Activated B cell treated with CpG ODN at 0.5 μM for 24 hours (primary cell): ENCODE measurements at regions of chr10 and their contacts with region 1.

Region 1: DNA sequence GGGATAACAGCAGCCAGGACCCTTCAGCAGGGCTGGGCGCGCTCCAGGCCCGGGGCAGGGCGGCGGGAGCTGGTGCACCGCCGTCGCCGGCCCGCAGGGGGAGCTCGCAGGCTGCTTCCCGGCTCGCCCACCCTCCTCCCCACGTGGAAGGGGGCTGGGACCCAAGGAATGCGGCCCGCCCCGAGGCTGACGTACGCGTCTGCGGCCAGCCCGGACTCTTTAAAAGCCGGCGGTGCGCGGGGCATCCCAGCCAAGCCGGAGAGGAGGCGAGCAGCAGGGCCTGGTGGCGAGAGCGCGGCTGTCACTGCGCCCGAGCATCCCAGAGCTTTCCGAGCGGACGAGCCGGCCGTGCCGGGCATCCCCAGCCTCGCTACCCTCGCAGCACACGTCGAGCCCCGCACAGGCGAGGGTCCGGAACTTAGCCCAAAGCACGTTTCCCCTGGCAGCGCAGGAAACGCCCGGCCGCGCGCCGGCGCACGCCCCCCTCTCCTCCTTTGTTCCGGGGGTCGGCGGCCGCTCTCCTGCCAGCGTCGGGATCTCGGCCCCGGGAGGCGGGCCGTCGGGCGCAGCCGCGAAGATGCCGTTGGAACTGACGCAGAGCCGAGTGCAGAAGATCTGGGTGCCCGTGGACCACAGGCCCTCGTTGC is at the start of gene PFKFB3:
- DNase-seq: peak; percentile 96
- ATAC-seq: peak; percentile 72
- H3K4me3 Mint-ChIP-seq: peak within 1 kb of the TSS; percentile 97
- H3K27ac Mint-ChIP-seq: peak within 1 kb of the TSS; percentile 82
- H3K4me1 Mint-ChIP-seq: peaks cover 33% of the 10 kb centered on the region
- H3K27me3 Mint-ChIP-seq: no peaks in the 10 kb centered on the region
- CTCF ChIP-seq: no peak
- total RNA-seq, gene PFKFB3: 96.7 and 105 TPM in 2 replicates

Region 2: GRCh38 chr10:5889624-5890451 is 313.0 kb before region 1 on chr10 and contains the starts of genes ANKRD16 and FBH1:
- CTCF ChIA-PET with region 1: no interaction called
- POLR2A ChIA-PET with region 1: no interaction called
- intact Hi-C with region 1: loop called (anchors 1 kb)
- DNase-seq: peak; percentile 100
- ATAC-seq: peak; percentile 85
- H3K4me3 Mint-ChIP-seq: peak within 1 kb of the TSS; percentile 87
- H3K27ac Mint-ChIP-seq: peak within 1 kb of the TSS; percentile 78
- H3K4me1 Mint-ChIP-seq: peaks cover 59% of the 10 kb centered on the region
- H3K27me3 Mint-ChIP-seq: no peaks in the 10 kb centered on the region
- CTCF ChIP-seq: no peak
- total RNA-seq, gene ANKRD16: 9.2 and 11.1 TPM in 2 replicates
- total RNA-seq, gene FBH1: 65.5 and 68.7 TPM in 2 replicates

Region 3: GRCh38 chr10:6088721-6089390 is 114.0 kb before region 1 on chr10 and contains the start of gene RBM17:
- CTCF ChIA-PET with region 1: interaction called, 4 read pairs
- POLR2A ChIA-PET with region 1: interaction called, 5 read pairs
- intact Hi-C with region 1: loop called (anchors 5 kb)
- DNase-seq: peak; percentile 99
- ATAC-seq: peak; percentile 85
- H3K4me3 Mint-ChIP-seq: peak within 1 kb of the TSS; percentile 97
- H3K27ac Mint-ChIP-seq: peak within 1 kb of the TSS; percentile 87
- H3K4me1 Mint-ChIP-seq: peaks cover 69% of the 10 kb centered on the region
- H3K27me3 Mint-ChIP-seq: no peaks in the 10 kb centered on the region
- CTCF ChIP-seq: peak; percentile 99
- total RNA-seq, gene RBM17: 207 and 209 TPM in 2 replicates

Region 4: DNA sequence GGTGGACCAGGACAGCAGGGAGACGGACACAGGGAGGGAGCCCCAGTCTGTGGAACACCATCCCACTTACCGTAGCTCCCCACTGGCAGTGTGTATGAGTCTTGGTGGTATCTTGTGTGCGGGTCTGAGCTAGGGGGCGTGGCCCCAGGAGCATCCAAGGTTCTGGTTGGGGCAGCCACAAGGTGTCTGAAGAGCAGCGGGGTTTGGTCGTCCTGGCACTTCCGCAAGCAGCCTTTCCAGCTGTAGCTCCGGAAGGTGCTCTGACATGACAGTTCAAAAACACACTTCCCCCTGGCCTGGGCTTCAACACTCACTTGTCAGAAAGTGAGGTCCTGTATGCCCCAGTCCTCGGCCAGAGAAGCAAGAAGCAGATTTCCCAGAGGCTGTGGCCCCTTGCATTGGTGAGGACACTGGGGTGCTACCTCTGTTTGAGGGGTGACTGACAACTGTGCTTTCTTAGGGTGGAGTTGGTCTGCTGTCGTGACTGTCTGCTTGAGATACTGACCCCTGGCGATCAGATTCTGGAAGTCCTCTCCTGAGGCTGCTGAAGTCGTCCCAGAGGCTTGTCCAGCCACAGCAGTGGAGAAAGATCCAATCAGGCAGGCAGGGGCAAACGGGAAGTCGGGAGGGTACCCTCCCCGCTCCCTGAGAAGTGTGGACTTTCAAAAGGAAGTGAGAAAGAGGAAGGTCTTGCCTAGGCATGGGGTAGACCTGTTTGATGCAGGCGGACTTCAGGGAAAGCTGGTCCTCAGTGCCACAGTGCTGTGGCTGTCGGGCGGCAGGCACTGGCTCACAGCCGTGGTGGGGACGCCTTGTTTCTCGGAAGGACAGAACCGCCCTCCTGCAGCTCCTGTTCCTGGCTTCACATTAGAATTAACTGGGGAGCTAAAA is 51.5 kb before region 1 on chr10:
- CTCF ChIA-PET with region 1: interaction called, 11 read pairs
- POLR2A ChIA-PET with region 1: interaction called, 12 read pairs
- intact Hi-C with region 1: no loop called
- DNase-seq: peak; percentile 53
- ATAC-seq: peak; percentile 83
- H3K4me3 Mint-ChIP-seq: peak overlapping the region; percentile 79
- H3K27ac Mint-ChIP-seq: peak overlapping the region; percentile 85
- H3K4me1 Mint-ChIP-seq: peaks cover 45% of the 10 kb centered on the region
- H3K27me3 Mint-ChIP-seq: no peaks in the 10 kb centered on the region
- CTCF ChIP-seq: no peak

Region 5: DNA sequence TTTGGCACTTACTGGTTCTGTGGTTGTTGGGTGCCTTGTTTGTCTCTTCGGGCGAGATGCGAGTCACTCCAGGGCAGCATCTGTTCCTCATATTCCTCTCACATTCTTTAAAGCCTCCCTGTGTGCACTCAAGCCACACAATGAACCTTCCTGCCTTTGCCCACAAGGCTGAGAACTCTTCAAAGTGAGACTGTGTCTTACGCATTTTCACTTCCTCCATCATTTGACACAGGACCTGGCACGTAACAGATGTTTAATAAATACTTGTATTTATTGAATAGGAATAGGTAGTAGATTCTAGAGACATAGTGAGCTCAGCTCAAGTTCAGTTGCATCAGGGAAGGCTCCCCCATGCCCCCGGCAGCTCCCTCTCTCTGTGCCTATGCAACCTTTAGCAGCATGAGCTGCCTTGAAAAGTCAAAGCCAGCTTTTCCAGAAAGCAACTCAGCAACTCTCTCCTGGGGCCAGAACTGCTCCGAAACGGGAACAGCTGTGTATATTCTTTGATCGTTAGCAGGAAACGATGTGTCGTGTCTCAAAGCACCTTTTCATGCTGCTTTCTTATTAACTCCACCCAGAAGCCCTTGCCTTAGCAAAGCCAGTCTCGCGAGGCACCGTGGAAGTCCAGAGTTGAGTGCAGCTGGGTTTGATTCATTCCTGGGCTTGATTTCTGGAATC is 97.4 kb after region 1 on chr10:
- CTCF ChIA-PET with region 1: interaction called, 16 read pairs
- POLR2A ChIA-PET with region 1: interaction called, 46 read pairs
- intact Hi-C with region 1: loop called (anchors 1 kb)
- DNase-seq: peak; percentile 48
- ATAC-seq: peak; percentile 80
- H3K4me3 Mint-ChIP-seq: peak overlapping the region; percentile 75
- H3K27ac Mint-ChIP-seq: peak overlapping the region; percentile 96
- H3K4me1 Mint-ChIP-seq: peaks cover 82% of the 10 kb centered on the region
- H3K27me3 Mint-ChIP-seq: no peaks in the 10 kb centered on the region
- CTCF ChIP-seq: no peak

Region 6: GRCh38 chr10:6348096-6348874 is 145.5 kb after region 1 on chr10:
- CTCF ChIA-PET with region 1: interaction called, 41 read pairs
- POLR2A ChIA-PET with region 1: interaction called, 120 read pairs
- intact Hi-C with region 1: loop called (anchors 1 kb)
- DNase-seq: peak; percentile 65
- ATAC-seq: peak; percentile 91
- H3K4me3 Mint-ChIP-seq: peak overlapping the region; percentile 80
- H3K27ac Mint-ChIP-seq: peak overlapping the region; percentile 97
- H3K4me1 Mint-ChIP-seq: peaks cover 57% of the 10 kb centered on the region
- H3K27me3 Mint-ChIP-seq: no peaks in the 10 kb centered on the region
- CTCF ChIP-seq: no peak